ENCODE measurements at regions of chr14 and their contacts with region 1.

Region 1: DNA sequence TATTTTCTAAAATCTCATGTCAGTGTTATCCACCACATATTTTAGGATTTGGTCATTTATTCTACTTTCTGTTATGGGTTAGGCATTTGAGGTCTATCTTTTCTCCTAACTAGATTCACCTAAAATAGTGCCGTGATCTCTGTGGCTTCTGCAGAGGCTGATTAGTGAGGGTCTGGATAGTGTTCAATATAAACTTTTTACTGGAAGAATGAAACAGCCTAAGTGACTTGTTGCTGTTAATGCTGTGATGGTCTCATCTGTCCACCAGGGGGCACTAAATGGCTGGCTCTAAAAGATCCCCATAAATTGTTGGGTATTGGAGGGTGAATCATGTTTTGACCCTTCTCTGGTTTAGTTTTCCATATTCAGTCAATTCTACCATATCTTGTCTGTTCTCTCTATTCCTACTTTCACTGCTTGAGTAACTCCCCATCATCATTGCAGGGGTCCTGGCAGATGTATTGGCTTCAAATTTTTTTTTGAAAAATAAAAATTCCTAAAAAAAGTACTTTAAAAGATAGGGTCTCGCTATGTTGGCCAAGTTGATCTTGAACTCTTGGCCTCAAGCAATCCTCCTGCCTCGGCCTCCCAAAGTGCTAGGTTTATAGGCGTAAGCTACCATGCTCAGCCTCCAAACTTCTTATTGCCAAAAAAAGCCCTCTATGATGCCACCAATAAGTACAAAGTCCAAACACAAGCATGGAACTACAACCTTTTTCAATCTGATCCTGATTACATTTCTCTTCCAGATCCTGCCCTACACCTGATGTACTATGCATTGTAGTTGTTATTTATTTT is 6.9 kb downstream of the PABPN1 start:
- DNase-seq: peak; percentile 72
- ATAC-seq: peak; percentile 70
- H3K4me3 Mint-ChIP-seq: no peak overlapping the region
- H3K27ac Mint-ChIP-seq: no peak overlapping the region
- H3K4me1 Mint-ChIP-seq: peaks cover 3% of the 10 kb centered on the region
- H3K27me3 Mint-ChIP-seq: no peaks in the 10 kb centered on the region; the same call in 1 of the 2 replicates
- CTCF ChIP-seq: peak; percentile 76

Region 2: GRCh38 chr14:23352511-23353432 is 24.6 kb after region 1 on chr14 and contains the start of gene SLC22A17:
- CTCF ChIA-PET with region 1: interaction called, 23 read pairs
- POLR2A ChIA-PET with region 1: interaction called, 17 read pairs
- DNase-seq: peak; percentile 84
- ATAC-seq: peak; percentile 90
- H3K4me3 Mint-ChIP-seq: peak within 1 kb of the TSS; percentile 63
- H3K27ac Mint-ChIP-seq: peak within 1 kb of the TSS; percentile 67
- H3K4me1 Mint-ChIP-seq: peaks cover 11% of the 10 kb centered on the region
- H3K27me3 Mint-ChIP-seq: peaks cover 43% of the 10 kb centered on the region
- CTCF ChIP-seq: no peak
- total RNA-seq, gene SLC22A17: 42.3 to 52.4 TPM (median 51.4 TPM) in 3 replicates

Region 3: GRCh38 chr14:23360496-23360895 is 32.4 kb after region 1 on chr14:
- CTCF ChIA-PET with region 1: interaction called, 27 read pairs
- POLR2A ChIA-PET with region 1: interaction called, 8 read pairs
- DNase-seq: peak; percentile 69
- ATAC-seq: peak; percentile 58
- H3K4me3 Mint-ChIP-seq: no peak overlapping the region
- H3K27ac Mint-ChIP-seq: no peak overlapping the region
- H3K4me1 Mint-ChIP-seq: peaks cover 22% of the 10 kb centered on the region
- H3K27me3 Mint-ChIP-seq: peaks cover 6% of the 10 kb centered on the region
- CTCF ChIP-seq: no peak

Measured in WTC11 (cell line).